Mammary epithelial cell (primary cell): ENCODE measurements at regions of chr4 and their contacts with region 1.

Region 1: DNA sequence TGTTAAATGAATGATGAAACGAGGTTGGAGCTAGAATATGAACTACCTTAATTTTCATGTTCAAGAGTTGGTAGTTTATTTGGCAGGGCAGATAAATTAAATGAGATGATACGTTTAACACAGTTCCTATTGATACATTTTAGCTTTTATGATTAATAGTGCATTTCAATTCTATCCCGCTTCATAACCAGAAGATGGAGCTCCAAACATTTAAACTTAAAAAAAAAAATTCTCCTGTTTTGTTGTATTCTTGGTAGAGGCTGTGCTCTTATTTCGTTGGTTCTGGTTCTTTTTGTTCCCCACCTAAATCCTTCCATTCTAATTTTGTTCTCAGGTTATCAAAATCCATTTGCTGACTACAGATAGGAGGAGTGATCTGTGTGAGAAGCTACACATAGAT is 71.8 kb upstream of the PTPN13 start:
- DNase-seq: no peak
- H3K4me3 ChIP-seq: no peak overlapping the region
- H3K27ac ChIP-seq: no peak overlapping the region
- H3K4me1 ChIP-seq: peaks cover 6% of the 10 kb centered on the region
- H3K27me3 ChIP-seq: no peaks in the 10 kb centered on the region
- CTCF ChIP-seq: peak; percentile 33 to 49

Region 2: DNA sequence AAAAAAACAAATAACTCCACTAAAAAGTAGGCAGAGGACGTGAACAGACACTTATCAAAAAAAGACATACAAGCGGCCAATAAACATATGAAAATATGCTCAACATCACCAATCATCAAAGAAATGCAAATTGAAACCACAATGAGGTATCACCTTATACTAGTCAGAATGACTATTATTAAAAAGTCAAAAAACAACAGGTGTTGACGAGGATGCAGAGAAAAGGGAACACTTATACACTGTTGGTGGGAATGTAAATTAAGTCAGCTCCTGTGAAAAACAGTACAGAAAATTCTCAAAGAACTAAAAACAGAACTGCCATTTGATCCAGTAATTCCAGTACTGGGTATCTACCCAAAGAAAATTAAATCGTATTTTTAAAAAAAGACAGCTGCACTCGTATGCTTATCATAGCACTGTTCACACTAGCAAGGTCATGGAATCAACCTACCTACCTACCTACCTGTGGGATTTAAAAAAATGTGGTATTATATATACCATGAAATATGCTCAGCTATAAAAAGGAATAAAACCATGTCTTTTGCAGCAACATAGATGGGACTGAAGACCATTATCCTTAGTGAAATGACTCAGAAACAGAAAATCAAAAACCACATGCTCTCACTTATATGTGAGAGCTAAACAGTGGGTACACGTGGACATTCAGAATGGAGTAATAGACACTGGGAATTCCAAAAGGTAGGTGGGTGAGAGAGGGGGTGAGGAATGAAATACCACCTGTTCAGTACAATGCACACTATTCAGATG is 46.9 kb after region 1 on chr4:
- CTCF ChIA-PET with region 1: no interaction called
- dilution Hi-C with region 1: no loop called
- in situ Hi-C with region 1: no loop called
- intact Hi-C with region 1: no loop called
- DNase-seq: no peak
- H3K4me3 ChIP-seq: no peak overlapping the region
- H3K27ac ChIP-seq: no peak overlapping the region
- H3K4me1 ChIP-seq: no peaks in the 10 kb centered on the region
- H3K27me3 ChIP-seq: no peaks in the 10 kb centered on the region
- CTCF ChIP-seq: no peak

Region 3: GRCh38 chr4:86586160-86586572 is 63.8 kb after region 1 on chr4:
- CTCF ChIA-PET with region 1: no interaction called
- dilution Hi-C with region 1: no loop called
- in situ Hi-C with region 1: no loop called
- intact Hi-C with region 1: no loop called
- DNase-seq: peak; percentile 86
- H3K4me3 ChIP-seq: no peak overlapping the region
- H3K27ac ChIP-seq: peak overlapping the region; percentile 98
- H3K4me1 ChIP-seq: peaks cover 22% of the 10 kb centered on the region
- H3K27me3 ChIP-seq: no peaks in the 10 kb centered on the region
- CTCF ChIP-seq: no peak

Region 4: GRCh38 chr4:86720508-86721068 is 198.2 kb after region 1 on chr4:
- CTCF ChIA-PET with region 1: no interaction called
- dilution Hi-C with region 1: no loop called
- in situ Hi-C with region 1: loop called in 1 of 2 experiments (anchors 25 kb)
- intact Hi-C with region 1: no loop called
- DNase-seq: peak; percentile 3
- H3K4me3 ChIP-seq: no peak overlapping the region
- H3K27ac ChIP-seq: no peak overlapping the region
- H3K4me1 ChIP-seq: no peaks in the 10 kb centered on the region
- H3K27me3 ChIP-seq: no peaks in the 10 kb centered on the region
- CTCF ChIP-seq: no peak

Region 5: GRCh38 chr4:86757468-86757867 is 235.1 kb after region 1 on chr4:
- CTCF ChIA-PET with region 1: no interaction called
- dilution Hi-C with region 1: no loop called
- in situ Hi-C with region 1: no loop called
- intact Hi-C with region 1: loop called (anchors 10 kb)
- DNase-seq: peak; percentile 47
- H3K4me3 ChIP-seq: no peak overlapping the region
- H3K27ac ChIP-seq: no peak overlapping the region
- H3K4me1 ChIP-seq: no peaks in the 10 kb centered on the region
- H3K27me3 ChIP-seq: no peaks in the 10 kb centered on the region
- CTCF ChIP-seq: no peak